ENCODE measurements at regions of chr22 and their contacts with region 1.

Region 1: DNA sequence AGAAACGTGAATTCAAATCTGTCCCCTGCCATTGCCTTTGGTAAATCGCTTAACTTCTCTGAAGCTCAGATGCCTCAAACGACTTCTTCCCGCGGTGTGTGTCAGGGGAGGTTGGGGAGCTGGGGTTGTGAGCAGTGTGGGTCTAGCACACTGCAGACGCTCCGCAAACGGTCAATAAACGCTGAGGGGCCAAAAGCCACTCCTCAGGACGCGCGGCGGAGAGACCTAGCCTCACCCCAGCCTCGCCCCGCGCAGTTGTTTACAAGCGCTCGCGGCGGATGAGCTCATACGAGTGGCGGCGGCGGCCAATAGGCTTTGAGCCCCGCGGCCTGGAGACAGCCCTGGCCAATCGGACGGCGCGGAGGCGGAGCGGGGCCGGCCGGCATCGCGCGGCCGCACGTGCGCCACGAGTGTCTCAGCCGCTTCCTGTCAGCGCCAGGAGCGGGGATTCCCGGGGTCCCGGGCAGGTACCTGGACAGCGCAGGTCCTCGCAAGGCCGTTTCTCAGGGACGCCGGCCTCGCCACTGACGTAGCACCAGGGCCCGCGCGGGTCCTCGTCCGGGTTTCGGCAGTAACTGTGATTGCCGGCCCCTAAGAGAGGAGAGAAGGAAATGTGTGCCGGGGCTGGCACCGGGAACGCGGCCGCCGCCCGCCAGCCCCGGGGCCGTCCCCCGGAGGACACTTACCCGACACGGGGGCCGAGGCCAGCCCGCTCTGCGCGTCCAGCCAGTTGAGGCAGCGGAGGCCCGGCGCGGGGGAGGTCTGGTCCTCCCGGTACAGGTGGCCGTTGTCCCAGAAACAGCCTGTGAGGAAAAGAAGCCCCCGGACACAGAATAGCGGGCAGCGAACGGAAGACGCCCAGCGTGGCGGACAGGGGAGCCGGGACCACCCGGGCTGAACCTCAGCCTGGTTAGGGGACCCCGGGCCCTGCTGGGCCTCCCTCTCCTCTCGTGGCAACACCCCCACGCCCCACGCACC is 1.5 kb downstream of the PIK3IP1 start:
- DNase-seq: peak; percentile 96
- H3K4me3 Mint-ChIP-seq: peak overlapping the region; percentile 98
- H3K27ac Mint-ChIP-seq: peak overlapping the region; percentile 99
- H3K4me1 Mint-ChIP-seq: peaks cover 69% of the 10 kb centered on the region
- H3K27me3 Mint-ChIP-seq: no peaks in the 10 kb centered on the region

Region 2: GRCh38 chr22:30830907-30831306 is 459.9 kb before region 1 on chr22:
- CTCF ChIA-PET with region 1: no interaction called
- POLR2A ChIA-PET with region 1: no interaction called
- DNase-seq: no peak
- H3K4me3 Mint-ChIP-seq: no peak overlapping the region
- H3K27ac Mint-ChIP-seq: no peak overlapping the region
- H3K4me1 Mint-ChIP-seq: peaks cover 6% of the 10 kb centered on the region
- H3K27me3 Mint-ChIP-seq: peaks cover 4% of the 10 kb centered on the region

Region 3: DNA sequence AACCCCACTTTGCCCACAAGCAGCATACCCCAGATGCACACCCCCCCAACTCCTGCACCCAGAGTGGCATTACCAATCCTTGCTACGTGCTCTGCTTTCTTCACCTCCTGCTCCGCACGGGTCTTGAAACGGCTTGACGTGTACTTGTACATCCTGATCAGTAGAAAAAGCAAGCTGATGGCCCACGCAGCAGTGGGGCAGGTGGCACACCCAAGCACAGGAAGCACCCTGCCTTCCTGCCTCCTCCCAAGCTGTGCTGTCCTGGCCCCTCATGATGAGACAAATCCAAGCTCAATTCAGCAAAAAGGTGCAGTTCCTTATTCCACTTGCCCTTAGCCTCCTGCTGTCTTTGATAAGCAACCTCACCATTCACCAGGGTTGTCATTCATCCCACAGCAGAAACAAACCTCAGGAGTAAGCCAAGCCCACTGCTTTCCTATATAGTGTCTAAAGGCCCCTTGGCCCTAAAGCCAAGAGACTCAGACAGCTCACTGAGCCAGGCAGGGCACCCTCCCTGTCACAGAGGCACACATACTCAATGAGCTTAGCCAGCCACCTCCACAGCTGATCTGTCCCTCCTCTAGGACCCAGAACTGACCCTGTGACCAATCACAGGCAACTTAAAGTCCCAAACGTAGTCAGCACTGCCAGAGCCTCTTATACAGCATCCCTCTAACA is 350.0 kb before region 1 on chr22:
- CTCF ChIA-PET with region 1: no interaction called
- POLR2A ChIA-PET with region 1: interaction called, 13 read pairs
- DNase-seq: peak; percentile 62
- H3K4me3 Mint-ChIP-seq: peak overlapping the region; percentile 77
- H3K27ac Mint-ChIP-seq: peak overlapping the region; percentile 91
- H3K4me1 Mint-ChIP-seq: peaks cover 78% of the 10 kb centered on the region
- H3K27me3 Mint-ChIP-seq: no peaks in the 10 kb centered on the region

Region 4: DNA sequence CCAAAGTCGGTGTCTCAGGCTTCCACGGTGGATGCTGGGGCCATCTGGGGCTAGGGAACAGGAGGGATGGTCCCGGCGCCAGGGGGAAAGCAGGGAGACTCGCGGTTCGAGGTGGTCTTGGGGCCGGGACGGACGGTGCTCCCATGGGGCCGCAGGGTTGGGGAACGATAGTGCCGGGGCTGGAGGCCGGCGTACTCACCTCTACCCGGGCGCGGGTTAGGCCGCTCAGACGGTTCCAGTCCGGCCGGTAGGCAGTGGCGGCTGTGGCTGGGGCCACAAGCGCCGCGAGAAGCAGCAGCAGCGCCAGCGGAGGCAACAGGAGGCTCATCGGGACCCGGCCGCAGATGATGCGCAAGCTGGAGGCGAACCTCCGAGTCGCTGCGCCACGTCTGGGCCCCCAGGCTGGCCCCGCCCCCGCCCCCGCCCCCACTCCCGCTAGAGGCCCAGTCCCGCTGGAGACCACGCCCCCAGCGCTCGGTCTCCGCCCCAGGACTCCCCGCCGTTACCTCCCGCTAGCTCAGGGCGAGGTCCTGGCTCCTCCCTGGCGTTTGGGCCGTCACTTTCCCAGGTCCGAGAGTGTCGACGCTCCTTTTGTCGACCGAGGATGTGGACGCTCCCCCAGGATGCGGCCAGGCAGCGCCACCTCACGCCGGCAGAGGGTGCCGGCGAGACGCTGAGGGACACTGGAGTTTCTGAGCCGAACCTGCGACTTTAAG is 183.4 kb before region 1 on chr22 and contains the start of gene SELENOM:
- CTCF ChIA-PET with region 1: interaction called, 16 read pairs
- POLR2A ChIA-PET with region 1: interaction called, 10 read pairs
- DNase-seq: peak; percentile 91
- H3K4me3 Mint-ChIP-seq: peak within 1 kb of the TSS; percentile 79
- H3K27ac Mint-ChIP-seq: peak within 1 kb of the TSS; percentile 1
- H3K4me1 Mint-ChIP-seq: peaks cover 15% of the 10 kb centered on the region
- H3K27me3 Mint-ChIP-seq: no peaks in the 10 kb centered on the region
- total RNA-seq, gene SELENOM: 2.3 to 2.4 TPM

Region 5: GRCh38 chr22:31211862-31212730 is 78.7 kb before region 1 on chr22 and contains the start of gene LIMK2:
- CTCF ChIA-PET with region 1: interaction called, 17 read pairs
- POLR2A ChIA-PET with region 1: interaction called, 78 read pairs
- DNase-seq: peak; percentile 98
- H3K4me3 Mint-ChIP-seq: peak within 1 kb of the TSS; percentile 82
- H3K27ac Mint-ChIP-seq: peak within 1 kb of the TSS; percentile 87
- H3K4me1 Mint-ChIP-seq: peaks cover 55% of the 10 kb centered on the region
- H3K27me3 Mint-ChIP-seq: no peaks in the 10 kb centered on the region
- total RNA-seq, gene LIMK2: 44.0 to 46.4 TPM

Region 6: DNA sequence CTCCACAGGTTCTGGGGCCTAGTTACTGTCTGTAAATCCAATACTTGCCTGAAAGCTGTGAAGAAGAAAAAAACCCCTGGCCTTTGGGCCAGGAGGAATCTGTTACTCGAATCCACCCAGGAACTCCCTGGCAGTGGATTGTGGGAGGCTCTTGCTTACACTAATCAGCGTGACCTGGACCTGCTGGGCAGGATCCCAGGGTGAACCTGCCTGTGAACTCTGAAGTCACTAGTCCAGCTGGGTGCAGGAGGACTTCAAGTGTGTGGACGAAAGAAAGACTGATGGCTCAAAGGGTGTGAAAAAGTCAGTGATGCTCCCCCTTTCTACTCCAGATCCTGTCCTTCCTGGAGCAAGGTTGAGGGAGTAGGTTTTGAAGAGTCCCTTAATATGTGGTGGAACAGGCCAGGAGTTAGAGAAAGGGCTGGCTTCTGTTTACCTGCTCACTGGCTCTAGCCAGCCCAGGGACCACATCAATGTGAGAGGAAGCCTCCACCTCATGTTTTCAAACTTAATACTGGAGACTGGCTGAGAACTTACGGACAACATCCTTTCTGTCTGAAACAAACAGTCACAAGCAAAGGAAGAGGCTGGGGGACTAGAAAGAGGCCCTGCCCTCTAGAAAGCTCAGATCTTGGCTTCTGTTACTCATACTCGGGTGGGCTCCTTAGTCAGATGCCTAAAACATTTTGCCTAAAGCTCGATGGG is 12.0 kb before region 1 on chr22:
- CTCF ChIA-PET with region 1: interaction called, 59 read pairs
- POLR2A ChIA-PET with region 1: interaction called, 138 read pairs
- DNase-seq: peak; percentile 38
- H3K4me3 Mint-ChIP-seq: no peak overlapping the region
- H3K27ac Mint-ChIP-seq: peak overlapping the region; percentile 93
- H3K4me1 Mint-ChIP-seq: peaks cover 42% of the 10 kb centered on the region
- H3K27me3 Mint-ChIP-seq: no peaks in the 10 kb centered on the region

Region 7: DNA sequence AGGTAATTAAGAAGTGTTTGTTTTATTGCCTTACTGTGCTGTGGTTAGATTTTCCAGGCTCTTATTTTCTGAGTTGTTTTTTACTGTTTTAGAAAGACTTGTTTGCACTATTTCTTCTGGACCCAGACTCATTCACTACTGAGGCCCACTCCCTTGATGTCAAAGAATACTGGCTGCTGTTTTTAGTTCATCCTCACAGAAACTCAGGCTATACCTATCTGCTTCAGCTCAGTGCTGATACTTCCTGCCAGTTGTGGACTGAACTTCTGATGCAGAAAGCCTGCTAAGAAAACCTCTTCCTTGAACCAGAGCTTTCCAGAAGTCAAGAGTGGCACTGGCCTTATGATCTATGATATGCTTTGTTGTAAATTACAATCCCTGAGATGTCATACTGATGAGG is 17.4 kb after region 1 on chr22:
- CTCF ChIA-PET with region 1: interaction called, 26 read pairs
- POLR2A ChIA-PET with region 1: interaction called, 60 read pairs
- DNase-seq: no peak
- H3K4me3 Mint-ChIP-seq: no peak overlapping the region
- H3K27ac Mint-ChIP-seq: peak overlapping the region; percentile 65
- H3K4me1 Mint-ChIP-seq: peaks cover 29% of the 10 kb centered on the region
- H3K27me3 Mint-ChIP-seq: no peaks in the 10 kb centered on the region

Region 8: GRCh38 chr22:31345331-31346254 is 54.8 kb after region 1 on chr22:
- CTCF ChIA-PET with region 1: interaction called, 13 read pairs
- POLR2A ChIA-PET with region 1: interaction called, 101 read pairs
- DNase-seq: peak; percentile 88
- H3K4me3 Mint-ChIP-seq: peak overlapping the region; percentile 81
- H3K27ac Mint-ChIP-seq: peak overlapping the region; percentile 74
- H3K4me1 Mint-ChIP-seq: peaks cover 49% of the 10 kb centered on the region
- H3K27me3 Mint-ChIP-seq: no peaks in the 10 kb centered on the region